Activated CD4-positive, alpha-beta T cell treated with anti-CD3 and anti-CD28 coated beads for 36 hours (primary cell): ENCODE measurements at regions of chr5 and their contacts with region 1.

Region 1: DNA sequence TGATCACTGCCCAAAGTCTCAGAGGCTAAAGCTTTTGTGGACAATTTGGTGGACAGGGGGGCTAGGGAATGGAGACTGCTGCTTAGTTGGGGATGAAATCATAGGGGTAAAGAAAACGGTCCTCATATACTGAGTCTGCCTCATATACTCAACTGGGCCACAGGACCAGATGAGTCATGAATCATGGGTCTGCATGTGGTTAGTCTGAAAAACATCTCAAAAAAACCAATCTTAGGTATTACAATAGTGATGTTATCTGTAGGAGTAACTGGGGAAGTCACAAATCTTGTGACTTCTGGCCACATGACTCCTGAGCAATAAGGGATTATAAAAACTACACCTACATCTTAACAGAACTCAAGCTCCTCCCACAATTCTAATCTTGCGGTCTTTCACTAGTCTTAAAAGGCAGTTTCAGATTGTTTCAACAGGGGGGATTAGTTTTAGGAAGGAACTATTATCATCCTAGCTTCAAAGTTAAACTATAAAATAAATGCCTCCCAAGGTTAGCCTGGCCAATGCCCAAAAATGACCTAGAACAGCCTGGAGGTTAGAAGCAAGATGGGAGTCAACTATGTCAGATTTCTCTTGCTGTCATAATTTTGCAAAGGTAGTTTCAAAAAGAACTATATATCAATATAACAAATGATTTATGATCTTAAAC is 17.5 kb downstream of the TMEM161B start:
- DNase-seq: peak; percentile 44
- ATAC-seq: peak; percentile 95
- H3K4me3 Mint-ChIP-seq: no peak overlapping the region
- H3K27ac Mint-ChIP-seq: peak overlapping the region; percentile 65
- H3K4me1 Mint-ChIP-seq: peaks cover 63% of the 10 kb centered on the region
- H3K27me3 Mint-ChIP-seq: no peaks in the 10 kb centered on the region

Region 2: GRCh38 chr5:88236866-88237642 is 14.1 kb before region 1 on chr5:
- CTCF ChIA-PET with region 1: interaction called, 4 read pairs
- POLR2A ChIA-PET with region 1: interaction called, 4 read pairs
- intact Hi-C with region 1: loop called in 1 of 2 experiments (anchors 2 kb)
- DNase-seq: no peak
- ATAC-seq: peak; percentile 76
- H3K4me3 Mint-ChIP-seq: no peak overlapping the region
- H3K27ac Mint-ChIP-seq: no peak overlapping the region
- H3K4me1 Mint-ChIP-seq: peaks cover 15% of the 10 kb centered on the region
- H3K27me3 Mint-ChIP-seq: no peaks in the 10 kb centered on the region

Region 3: GRCh38 chr5:88322785-88323184 is 71.6 kb after region 1 on chr5:
- CTCF ChIA-PET with region 1: no interaction called
- POLR2A ChIA-PET with region 1: no interaction called
- intact Hi-C with region 1: no loop called
- DNase-seq: no peak
- ATAC-seq: no peak
- H3K4me3 Mint-ChIP-seq: no peak overlapping the region
- H3K27ac Mint-ChIP-seq: no peak overlapping the region
- H3K4me1 Mint-ChIP-seq: no peaks in the 10 kb centered on the region
- H3K27me3 Mint-ChIP-seq: no peaks in the 10 kb centered on the region